Activated naive CD4-positive, alpha-beta T cell treated with anti-CD3 and anti-CD28 coated beads for 36 hours (primary cell): ENCODE measurements at regions of chr13 and their contacts with region 1.

Region 1: GRCh38 chr13:45417790-45418534 is at the start of gene SLC25A30:
- DNase-seq: peak; percentile 89
- H3K4me3 Mint-ChIP-seq: peak within 1 kb of the TSS; percentile 94
- H3K27ac Mint-ChIP-seq: peak within 1 kb of the TSS; percentile 92
- H3K4me1 Mint-ChIP-seq: peaks cover 24% of the 10 kb centered on the region
- H3K27me3 Mint-ChIP-seq: no peaks in the 10 kb centered on the region
- total RNA-seq, gene SLC25A30: 13.6 to 15.1 TPM

Region 2: DNA sequence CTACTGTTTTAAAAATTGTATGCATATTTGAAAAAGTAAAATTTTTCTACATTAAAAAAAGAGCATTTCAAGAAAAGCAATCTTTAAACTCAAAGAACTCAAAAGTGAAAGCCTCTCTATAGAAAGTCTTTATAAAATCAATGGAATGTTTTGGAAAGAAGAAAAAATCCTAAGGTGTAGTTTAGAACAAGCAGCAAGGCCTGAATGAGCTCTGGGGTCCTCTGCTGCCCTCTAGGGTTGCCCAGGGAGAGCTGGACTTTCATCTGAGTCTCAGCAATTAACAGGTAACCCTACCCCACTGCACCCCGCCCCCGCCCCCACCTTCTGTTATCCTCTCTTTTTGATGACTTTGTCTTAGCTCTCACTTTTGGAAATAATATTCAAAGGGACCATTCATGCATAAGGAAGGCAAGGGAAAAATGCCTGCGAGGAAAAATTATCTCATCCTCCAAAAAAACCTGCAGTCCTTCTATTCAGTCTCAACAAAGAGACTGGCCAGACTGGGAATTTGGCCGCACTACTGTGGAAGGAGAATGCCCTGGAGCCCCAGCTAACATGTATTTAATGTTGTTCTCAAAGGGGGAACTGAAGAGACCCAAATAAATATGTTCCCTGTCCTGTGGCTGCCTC is 23.9 kb before region 1 on chr13:
- CTCF ChIA-PET with region 1: interaction called, 23 read pairs
- intact Hi-C with region 1: loop called (anchors 1 kb)
- DNase-seq: peak; percentile 61
- H3K4me3 Mint-ChIP-seq: no peak overlapping the region
- H3K27ac Mint-ChIP-seq: no peak overlapping the region
- H3K4me1 Mint-ChIP-seq: peaks cover 47% of the 10 kb centered on the region
- H3K27me3 Mint-ChIP-seq: no peaks in the 10 kb centered on the region